ENCODE measurements at regions of chr14 and their contacts with region 1.

Region 1: GRCh38 chr14:102694530-102695166 is 82.6 kb upstream of the TRAF3 start:
- DNase-seq: peak; percentile 81
- ATAC-seq: peak; percentile 64
- H3K4me3 ChIP-seq: no peak overlapping the region
- H3K4me3 Mint-ChIP-seq: no peak overlapping the region
- H3K27ac ChIP-seq: no peak overlapping the region
- H3K27ac Mint-ChIP-seq: no peak overlapping the region
- H3K4me1 ChIP-seq: peaks cover 8 to 10% of the 10 kb centered on the region in 2 donors
- H3K4me1 Mint-ChIP-seq: peaks cover 36% of the 10 kb centered on the region
- H3K27me3 ChIP-seq: no peaks in the 10 kb centered on the region
- H3K27me3 Mint-ChIP-seq: no peaks in the 10 kb centered on the region
- CTCF ChIP-seq: peak; percentile 78

Region 2: DNA sequence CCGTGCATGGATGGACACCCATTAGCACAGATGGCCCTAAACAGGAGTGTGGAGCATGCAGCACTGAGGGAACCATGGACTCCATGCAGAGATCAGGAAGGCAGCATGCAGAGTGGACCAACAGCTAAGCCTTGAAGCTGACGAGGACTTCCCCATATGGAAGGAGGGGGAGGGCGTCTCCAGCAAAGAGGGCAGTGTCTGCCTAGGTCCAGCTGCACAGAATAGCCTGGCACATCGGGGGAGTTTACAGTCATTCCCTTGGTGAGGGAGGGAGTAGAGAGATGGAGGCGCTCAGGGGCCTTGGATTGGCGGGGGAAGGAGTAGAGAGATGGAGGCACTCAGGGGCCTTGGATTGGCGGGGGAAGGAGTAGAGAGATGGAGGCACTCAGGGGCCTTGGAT is 249.6 kb before region 1 on chr14:
- CTCF ChIA-PET with region 1: no interaction called
- POLR2A ChIA-PET with region 1: no interaction called
- intact Hi-C with region 1: no loop called
- DNase-seq: no peak
- ATAC-seq: no peak
- H3K4me3 ChIP-seq: no peak overlapping the region
- H3K4me3 Mint-ChIP-seq: no peak overlapping the region
- H3K27ac ChIP-seq: no peak overlapping the region
- H3K27ac Mint-ChIP-seq: no peak overlapping the region
- H3K4me1 ChIP-seq: no peaks in the 10 kb centered on the region
- H3K4me1 Mint-ChIP-seq: no peaks in the 10 kb centered on the region
- H3K27me3 ChIP-seq: no peaks in the 10 kb centered on the region
- H3K27me3 Mint-ChIP-seq: no peaks in the 10 kb centered on the region
- CTCF ChIP-seq: no peak

Region 3: DNA sequence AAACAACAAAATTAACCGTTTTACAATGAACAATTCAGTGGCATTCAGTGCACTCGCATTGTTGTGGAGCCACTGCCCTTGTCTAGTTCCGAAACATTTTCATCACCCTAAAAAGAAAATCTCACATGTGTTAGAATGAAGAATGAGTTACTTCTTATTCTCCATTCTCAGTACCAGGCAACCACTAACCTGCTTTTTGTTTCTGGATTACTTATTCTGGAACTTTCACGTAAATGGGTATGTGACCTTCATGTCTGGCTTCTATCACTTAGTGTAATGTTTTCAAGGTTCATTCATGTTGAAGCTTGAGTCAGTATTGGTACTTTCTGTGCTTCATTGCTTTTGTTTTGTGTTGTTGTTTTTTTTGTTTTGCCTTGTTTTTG is 86.6 kb before region 1 on chr14:
- CTCF ChIA-PET with region 1: interaction called, 9 read pairs
- POLR2A ChIA-PET with region 1: interaction called, 10 read pairs
- intact Hi-C with region 1: no loop called
- DNase-seq: no peak
- ATAC-seq: no peak
- H3K4me3 ChIP-seq: no peak overlapping the region
- H3K4me3 Mint-ChIP-seq: peak overlapping the region; percentile 49
- H3K27ac ChIP-seq: no peak overlapping the region
- H3K27ac Mint-ChIP-seq: no peak overlapping the region
- H3K4me1 ChIP-seq: peaks cover 30 to 51% of the 10 kb centered on the region in 2 donors
- H3K4me1 Mint-ChIP-seq: peaks cover 72% of the 10 kb centered on the region
- H3K27me3 ChIP-seq: no peaks in the 10 kb centered on the region
- H3K27me3 Mint-ChIP-seq: no peaks in the 10 kb centered on the region
- CTCF ChIP-seq: no peak

Region 4: GRCh38 chr14:102629808-102630350 is 64.8 kb before region 1 on chr14:
- CTCF ChIA-PET with region 1: no interaction called
- POLR2A ChIA-PET with region 1: no interaction called
- intact Hi-C with region 1: no loop called
- DNase-seq: no peak
- ATAC-seq: no peak
- H3K4me3 ChIP-seq: no peak overlapping the region
- H3K4me3 Mint-ChIP-seq: no peak overlapping the region
- H3K27ac ChIP-seq: no peak overlapping the region
- H3K27ac Mint-ChIP-seq: peak overlapping the region; percentile 35
- H3K4me1 ChIP-seq: peaks cover 5 to 12% of the 10 kb centered on the region in 2 donors
- H3K4me1 Mint-ChIP-seq: peaks cover 56% of the 10 kb centered on the region
- H3K27me3 ChIP-seq: no peaks in the 10 kb centered on the region
- H3K27me3 Mint-ChIP-seq: no peaks in the 10 kb centered on the region
- CTCF ChIP-seq: no peak

Region 5: GRCh38 chr14:102675396-102675795 is 19.3 kb before region 1 on chr14:
- CTCF ChIA-PET with region 1: no interaction called
- POLR2A ChIA-PET with region 1: no interaction called
- intact Hi-C with region 1: no loop called
- DNase-seq: no peak
- ATAC-seq: no peak
- H3K4me3 ChIP-seq: no peak overlapping the region
- H3K4me3 Mint-ChIP-seq: no peak overlapping the region
- H3K27ac ChIP-seq: no peak overlapping the region
- H3K27ac Mint-ChIP-seq: no peak overlapping the region
- H3K4me1 ChIP-seq: peaks cover 3 to 8% of the 10 kb centered on the region in 2 donors
- H3K4me1 Mint-ChIP-seq: peaks cover 21% of the 10 kb centered on the region
- H3K27me3 ChIP-seq: no peaks in the 10 kb centered on the region
- H3K27me3 Mint-ChIP-seq: no peaks in the 10 kb centered on the region
- CTCF ChIP-seq: no peak

Region 6: GRCh38 chr14:102774391-102775153 is 79.9 kb after region 1 on chr14:
- CTCF ChIA-PET with region 1: interaction called, 28 read pairs
- POLR2A ChIA-PET with region 1: interaction called, 4 read pairs
- intact Hi-C with region 1: loop called (anchors 1 kb)
- DNase-seq: peak; percentile 90
- ATAC-seq: peak; percentile 19
- H3K4me3 ChIP-seq: no peak overlapping the region
- H3K4me3 Mint-ChIP-seq: peak overlapping the region; percentile 81
- H3K27ac ChIP-seq: peak overlapping the region; percentile 95 to 97
- H3K27ac Mint-ChIP-seq: peak overlapping the region; percentile 98
- H3K4me1 ChIP-seq: peaks cover 54 to 67% of the 10 kb centered on the region in 2 donors
- H3K4me1 Mint-ChIP-seq: peaks cover 59% of the 10 kb centered on the region
- H3K27me3 ChIP-seq: no peaks in the 10 kb centered on the region
- H3K27me3 Mint-ChIP-seq: no peaks in the 10 kb centered on the region
- CTCF ChIP-seq: peak; percentile 75

Region 7: GRCh38 chr14:102900631-102901571 is 206.3 kb after region 1 on chr14:
- CTCF ChIA-PET with region 1: interaction called, 20 read pairs
- POLR2A ChIA-PET with region 1: no interaction called
- intact Hi-C with region 1: no loop called
- DNase-seq: peak; percentile 82
- ATAC-seq: peak; percentile 66
- H3K4me3 ChIP-seq: peak overlapping the region in 4 of 5 experiments; percentile 15 to 45 (median 30)
- H3K4me3 Mint-ChIP-seq: peak overlapping the region; percentile 85
- H3K27ac ChIP-seq: peak overlapping the region; percentile 91 to 93
- H3K27ac Mint-ChIP-seq: peak overlapping the region; percentile 98
- H3K4me1 ChIP-seq: peaks cover 62 to 71% of the 10 kb centered on the region in 2 donors
- H3K4me1 Mint-ChIP-seq: peaks cover 61% of the 10 kb centered on the region
- H3K27me3 ChIP-seq: no peaks in the 10 kb centered on the region
- H3K27me3 Mint-ChIP-seq: no peaks in the 10 kb centered on the region
- CTCF ChIP-seq: no peak

Region 8: DNA sequence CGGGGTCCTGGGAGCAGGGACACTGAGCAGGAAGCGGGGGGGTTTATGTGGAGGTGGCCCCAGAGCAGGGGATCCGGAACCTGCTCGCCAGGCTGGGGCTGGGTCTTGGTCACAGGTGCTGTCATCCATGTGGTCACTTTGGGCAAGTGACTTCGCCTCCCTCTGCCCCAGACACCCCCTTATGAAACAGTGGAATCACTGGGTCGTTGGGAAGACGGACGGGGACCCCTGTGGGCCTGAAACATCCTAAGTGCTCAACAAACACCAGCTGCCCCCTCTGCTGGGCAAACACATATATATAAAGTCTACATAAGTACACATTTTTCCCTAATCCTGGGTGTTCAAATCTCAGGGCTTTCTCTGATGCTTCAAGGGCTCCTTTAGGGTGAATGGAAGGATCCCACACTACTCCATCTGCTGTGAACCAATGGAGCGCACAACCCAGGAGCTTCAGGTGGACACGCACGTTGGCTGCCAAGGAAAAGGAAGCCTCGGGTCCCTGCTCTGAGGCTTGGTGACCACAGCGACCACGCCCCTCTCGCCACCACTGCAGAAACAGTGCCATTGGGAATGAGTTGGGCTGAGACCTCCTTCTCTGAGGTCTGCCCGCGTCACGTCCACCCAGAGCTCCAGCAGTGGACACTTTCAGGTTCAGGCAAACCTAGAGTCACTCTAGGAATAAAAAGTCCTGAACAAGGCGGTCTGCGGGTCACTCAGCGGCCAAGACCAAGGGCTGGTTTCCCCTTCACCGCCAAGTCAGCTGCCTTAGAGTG is 308.1 kb after region 1 on chr14:
- CTCF ChIA-PET with region 1: interaction called, 13 read pairs
- POLR2A ChIA-PET with region 1: no interaction called
- intact Hi-C with region 1: no loop called
- DNase-seq: peak; percentile 21
- ATAC-seq: no peak
- H3K4me3 ChIP-seq: no peak overlapping the region
- H3K4me3 Mint-ChIP-seq: no peak overlapping the region
- H3K27ac ChIP-seq: no peak overlapping the region
- H3K27ac Mint-ChIP-seq: peak overlapping the region; percentile 74
- H3K4me1 ChIP-seq: peaks cover 0 to 17% of the 10 kb centered on the region in 2 donors
- H3K4me1 Mint-ChIP-seq: peaks cover 10% of the 10 kb centered on the region
- H3K27me3 ChIP-seq: no peaks in the 10 kb centered on the region
- H3K27me3 Mint-ChIP-seq: no peaks in the 10 kb centered on the region
- CTCF ChIP-seq: no peak

Region 9: DNA sequence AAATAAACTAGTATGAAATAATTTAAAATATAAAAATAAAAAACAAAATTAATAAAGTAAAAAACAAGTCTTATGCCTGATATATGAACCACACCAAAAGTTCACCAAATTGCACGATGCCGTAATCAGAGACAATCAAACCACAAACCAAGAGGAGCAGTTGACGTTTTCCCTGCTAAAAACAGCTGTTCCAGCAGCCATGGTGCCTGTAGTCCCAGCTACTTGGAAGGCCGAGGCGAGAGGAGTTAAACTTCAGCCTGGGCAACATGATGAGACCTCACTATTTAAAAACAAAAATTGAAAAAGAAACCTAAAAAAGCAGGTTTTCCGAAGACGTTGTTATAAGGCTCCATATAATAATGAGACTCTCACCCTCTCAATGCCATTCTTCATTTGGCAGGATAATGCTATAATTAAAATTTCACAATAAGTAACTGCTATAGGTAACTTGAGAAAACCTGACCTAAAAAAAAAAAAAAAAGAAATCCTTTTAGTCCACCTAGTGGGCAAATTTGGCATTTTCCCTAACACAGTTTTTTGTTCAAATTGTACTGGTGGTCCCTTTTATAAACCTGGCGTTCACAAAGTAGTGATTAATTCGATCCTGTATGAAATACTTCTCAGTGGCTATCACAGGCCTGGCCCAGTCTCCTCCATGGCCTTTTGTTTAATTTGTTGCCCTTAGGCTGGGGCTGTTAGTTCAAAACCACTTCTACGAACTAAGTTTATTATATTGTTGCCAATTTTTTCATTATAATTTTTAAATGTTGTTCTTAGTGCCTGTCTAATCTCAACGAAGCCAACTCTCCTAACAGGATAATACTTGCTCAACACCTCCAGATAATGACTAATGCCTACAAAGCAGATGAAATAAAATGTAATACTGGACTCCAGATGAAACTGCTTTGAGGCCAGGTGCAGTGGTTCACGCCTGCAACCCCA is 490.7 kb after region 1 on chr14:
- CTCF ChIA-PET with region 1: interaction called, 6 read pairs
- POLR2A ChIA-PET with region 1: no interaction called
- intact Hi-C with region 1: loop called (anchors 10 kb)
- DNase-seq: peak; percentile 49
- ATAC-seq: no peak
- H3K4me3 ChIP-seq: no peak overlapping the region
- H3K4me3 Mint-ChIP-seq: no peak overlapping the region
- H3K27ac ChIP-seq: no peak overlapping the region
- H3K27ac Mint-ChIP-seq: no peak overlapping the region
- H3K4me1 ChIP-seq: peaks cover 3 to 14% of the 10 kb centered on the region in 2 donors
- H3K4me1 Mint-ChIP-seq: peaks cover 12% of the 10 kb centered on the region
- H3K27me3 ChIP-seq: peaks cover 0 to 30% (median 19%) of the 10 kb centered on the region in 4 experiments
- H3K27me3 Mint-ChIP-seq: peaks cover 45% of the 10 kb centered on the region
- CTCF ChIP-seq: peak; percentile 82